Heart right ventricle (tissue), 16 donors: ENCODE measurements at regions of chr1 and their contacts with region 1.

Region 1: GRCh38 chr1:150925816-150926741 is at the start of gene SETDB1:
- DNase-seq: peak; percentile 93 to 96
- ATAC-seq: peak; percentile 98 to 99 (median 99)
- H3K4me3 ChIP-seq: peak within 1 kb of the TSS; percentile 49 to 81 (median 70)
- H3K27ac ChIP-seq: peak within 1 kb of the TSS in 9 of 10 donors; percentile 57 to 93 (median 83)
- H3K4me1 ChIP-seq: peaks cover 0 to 31% (median 10%) of the 10 kb centered on the region in 9 donors
- H3K27me3 ChIP-seq: no peaks in the 10 kb centered on the region
- CTCF ChIP-seq: peak in 6 of 9 donors; percentile 7 to 33 (median 20)
- total RNA-seq, gene SETDB1: 14.5 to 23.8 (median 17.6) TPM

Region 2: GRCh38 chr1:150708595-150708994 is 217.5 kb before region 1 on chr1:
- intact Hi-C with region 1: loop called in 1 of 10 experiments (anchors 10 kb)
- DNase-seq: no peak
- ATAC-seq: no peak
- H3K4me3 ChIP-seq: no peak overlapping the region
- H3K27ac ChIP-seq: no peak overlapping the region
- H3K4me1 ChIP-seq: no peaks in the 10 kb centered on the region
- H3K27me3 ChIP-seq: no peaks in the 10 kb centered on the region
- CTCF ChIP-seq: no peak

Region 3: GRCh38 chr1:150829743-150830142 is 96.3 kb before region 1 on chr1:
- intact Hi-C with region 1: loop called in 2 of 10 experiments (anchors 10 kb)
- DNase-seq: no peak
- ATAC-seq: no peak
- H3K4me3 ChIP-seq: no peak overlapping the region
- H3K27ac ChIP-seq: no peak overlapping the region
- H3K4me1 ChIP-seq: no peaks in the 10 kb centered on the region
- H3K27me3 ChIP-seq: no peaks in the 10 kb centered on the region
- CTCF ChIP-seq: peak in 1 of 9 donors; percentile 28

Region 4: GRCh38 chr1:150876119-150876454 is 50.0 kb before region 1 on chr1:
- intact Hi-C with region 1: loop called in 5 of 10 experiments (anchors 2 to 10 kb)
- DNase-seq: no peak
- ATAC-seq: peak; percentile 62 to 82 (median 66)
- H3K4me3 ChIP-seq: peak overlapping the region; percentile 48 to 98 (median 89)
- H3K27ac ChIP-seq: peak overlapping the region; percentile 87 to 99 (median 96)
- H3K4me1 ChIP-seq: peaks cover 0 to 45% (median 22%) of the 10 kb centered on the region in 9 donors
- H3K27me3 ChIP-seq: no peaks in the 10 kb centered on the region
- CTCF ChIP-seq: no peak